MCF 10A (cell line): ENCODE measurements at regions of chr3 and their contacts with region 1.

Region 1: GRCh38 chr3:193982258-193982659 is 153.7 kb upstream of the HES1 start:
- DNase-seq: peak; percentile 98
- H3K4me3 Mint-ChIP-seq: no peak overlapping the region
- H3K27ac Mint-ChIP-seq: peak overlapping the region; percentile 63
- H3K4me1 Mint-ChIP-seq: peaks cover 38% of the 10 kb centered on the region
- H3K27me3 Mint-ChIP-seq: peaks cover 7% of the 10 kb centered on the region
- CTCF ChIP-seq: no peak

Region 2: GRCh38 chr3:193922034-193922774 is 60.1 kb before region 1 on chr3:
- CTCF ChIA-PET with region 1: no interaction called
- POLR2A ChIA-PET with region 1: no interaction called
- intact Hi-C with region 1: no loop called
- DNase-seq: no peak
- H3K4me3 Mint-ChIP-seq: no peak overlapping the region
- H3K27ac Mint-ChIP-seq: no peak overlapping the region
- H3K4me1 Mint-ChIP-seq: no peaks in the 10 kb centered on the region
- H3K27me3 Mint-ChIP-seq: no peaks in the 10 kb centered on the region
- CTCF ChIP-seq: no peak

Region 3: GRCh38 chr3:193971261-193971751 is 11.0 kb before region 1 on chr3:
- CTCF ChIA-PET with region 1: interaction called, 3 read pairs
- POLR2A ChIA-PET with region 1: interaction called, 11 read pairs
- intact Hi-C with region 1: no loop called
- DNase-seq: peak; percentile 71
- H3K4me3 Mint-ChIP-seq: no peak overlapping the region
- H3K27ac Mint-ChIP-seq: peak overlapping the region; percentile 42
- H3K4me1 Mint-ChIP-seq: peaks cover 23% of the 10 kb centered on the region
- H3K27me3 Mint-ChIP-seq: no peaks in the 10 kb centered on the region
- CTCF ChIP-seq: no peak